ENCODE measurements at regions of chr11 and their contacts with region 1.

Region 1: DNA sequence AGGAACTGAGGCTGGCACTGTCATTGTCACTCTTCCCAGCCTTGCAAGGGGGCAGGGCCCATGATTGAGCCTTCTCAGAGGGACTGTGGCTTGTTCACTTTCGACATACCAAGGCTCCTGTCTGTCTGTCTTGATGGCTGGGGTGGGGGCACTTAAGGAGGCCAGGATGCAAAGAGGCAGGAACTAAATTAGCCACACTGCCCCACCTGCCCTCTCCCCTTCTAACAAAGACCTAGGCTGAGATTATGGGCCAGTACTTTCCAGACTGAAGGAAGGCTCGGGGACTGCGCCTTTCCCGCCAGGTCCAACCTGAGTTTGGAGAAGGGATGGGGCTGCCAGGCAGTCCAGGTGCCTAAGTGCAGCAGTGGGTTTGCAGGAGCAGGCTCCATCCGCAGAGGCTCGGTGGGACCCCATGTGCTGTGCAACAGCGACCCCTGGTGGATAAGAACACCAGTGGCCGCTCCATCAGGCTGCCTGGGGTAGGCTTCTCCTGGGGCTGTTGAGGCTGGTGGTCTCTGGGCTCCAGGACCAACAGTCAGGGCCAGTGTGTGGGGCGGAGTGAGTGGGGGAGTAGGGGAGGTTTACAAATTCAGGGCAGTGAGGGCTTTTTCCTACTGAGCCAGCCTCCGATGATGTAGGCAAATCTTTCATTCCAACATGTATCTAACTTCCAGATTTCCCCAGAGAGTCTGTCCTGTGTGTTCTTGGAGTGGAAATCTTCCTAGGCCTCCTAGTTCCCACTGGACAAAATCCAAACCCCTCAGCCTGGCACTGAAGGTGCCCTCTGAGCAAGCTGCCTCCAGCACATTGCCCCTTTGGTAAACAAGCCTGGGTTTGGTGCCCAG is 93.9 kb downstream of the INSC start:
- DNase-seq: peak; percentile 75
- ATAC-seq: peak; percentile 91

Region 2: GRCh38 chr11:15101072-15101709 is 107.4 kb before region 1 on chr11:
- intact Hi-C with region 1: loop called (anchors 5 kb)
- DNase-seq: peak; percentile 61
- ATAC-seq: peak; percentile 81